Gastrocnemius medialis (tissue), 4 donors: ENCODE measurements at regions of chr2 and their contacts with region 1.

Region 1: GRCh38 chr2:199850718-199851500 is at the start of gene FTCDNL1:
- DNase-seq: peak; percentile 53 to 72
- ATAC-seq: peak; percentile 92 to 94
- H3K4me3 ChIP-seq: peak within 1 kb of the TSS; percentile 52 to 77 (median 68)
- H3K27ac ChIP-seq: peak within 1 kb of the TSS; percentile 76 to 90 (median 84)
- H3K4me1 ChIP-seq: peaks cover 0 to 5% of the 10 kb centered on the region in 2 donors
- H3K27me3 ChIP-seq: no peaks in the 10 kb centered on the region
- CTCF ChIP-seq: peak; percentile 34 to 64 (median 49)
- POLR2A ChIP-seq: peak; percentile 73 to 80
- total RNA-seq, gene FTCDNL1: 7.9 to 21.9 (median 16.3) TPM

Region 2: GRCh38 chr2:199727306-199727705 is 123.6 kb before region 1 on chr2:
- in situ Hi-C with region 1: no loop called
- intact Hi-C with region 1: no loop called
- DNase-seq: no peak
- ATAC-seq: no peak
- H3K4me3 ChIP-seq: no peak overlapping the region
- H3K27ac ChIP-seq: no peak overlapping the region
- H3K4me1 ChIP-seq: no peaks in the 10 kb centered on the region
- H3K27me3 ChIP-seq: no peaks in the 10 kb centered on the region
- CTCF ChIP-seq: no peak
- POLR2A ChIP-seq: no peak

Region 3: GRCh38 chr2:199911052-199911876 is 60.4 kb after region 1 on chr2 and contains the start of gene C2orf69:
- in situ Hi-C with region 1: no loop called
- intact Hi-C with region 1: loop called (anchors 1 kb)
- DNase-seq: peak; percentile 95 to 96
- ATAC-seq: peak; percentile 97
- H3K4me3 ChIP-seq: peak within 1 kb of the TSS; percentile 89 to 99 (median 90)
- H3K27ac ChIP-seq: peak within 1 kb of the TSS; percentile 96 to 100 (median 96)
- H3K4me1 ChIP-seq: peaks cover 15 to 32% of the 10 kb centered on the region in 2 donors
- H3K27me3 ChIP-seq: no peaks in the 10 kb centered on the region
- CTCF ChIP-seq: peak in 2 of 5 experiments; percentile 15 to 16
- POLR2A ChIP-seq: peak; percentile 84 to 85
- total RNA-seq, gene C2orf69: 5.5 to 11.4 (median 9.3) TPM